Panc1 (cell line): ENCODE measurements at regions of chr1 and their contacts with region 1.

Region 1: GRCh38 chr1:39973503-39974135 is 18.7 kb downstream of the MFSD2A start:
- DNase-seq: peak; percentile 52
- ATAC-seq: peak; percentile 93
- H3K4me3 ChIP-seq: no peak overlapping the region
- H3K27ac ChIP-seq: no peak overlapping the region
- H3K4me1 ChIP-seq: no peaks in the 10 kb centered on the region
- H3K27me3 ChIP-seq: no peaks in the 10 kb centered on the region
- CTCF ChIP-seq: peak; percentile 96

Region 2: GRCh38 chr1:39387452-39387851 is 586.2 kb before region 1 on chr1:
- CTCF ChIA-PET with region 1: no interaction called
- POLR2A ChIA-PET with region 1: no interaction called
- in situ Hi-C with region 1: no loop called
- intact Hi-C with region 1: no loop called
- DNase-seq: no peak
- ATAC-seq: peak; percentile 60
- H3K4me3 ChIP-seq: no peak overlapping the region
- H3K27ac ChIP-seq: no peak overlapping the region; the same call in 1 of the 2 replicates
- H3K4me1 ChIP-seq: peaks cover 23% of the 10 kb centered on the region
- H3K27me3 ChIP-seq: no peaks in the 10 kb centered on the region
- CTCF ChIP-seq: peak; percentile 62

Region 3: GRCh38 chr1:39816415-39817090 is 157.1 kb before region 1 on chr1:
- CTCF ChIA-PET with region 1: interaction called, 3 read pairs
- POLR2A ChIA-PET with region 1: no interaction called
- in situ Hi-C with region 1: no loop called
- intact Hi-C with region 1: loop called (anchors 5 kb)
- DNase-seq: peak; percentile 77
- ATAC-seq: peak; percentile 87
- H3K4me3 ChIP-seq: no peak overlapping the region
- H3K27ac ChIP-seq: no peak overlapping the region
- H3K4me1 ChIP-seq: no peaks in the 10 kb centered on the region
- H3K27me3 ChIP-seq: no peaks in the 10 kb centered on the region
- CTCF ChIP-seq: peak; percentile 92

Region 4: GRCh38 chr1:39919545-39919944 is 54.1 kb before region 1 on chr1:
- CTCF ChIA-PET with region 1: interaction called, 28 read pairs
- POLR2A ChIA-PET with region 1: no interaction called
- in situ Hi-C with region 1: no loop called
- intact Hi-C with region 1: loop called (anchors 5 kb)
- DNase-seq: peak; percentile 45
- ATAC-seq: peak; percentile 97
- H3K4me3 ChIP-seq: no peak overlapping the region
- H3K27ac ChIP-seq: no peak overlapping the region
- H3K4me1 ChIP-seq: no peaks in the 10 kb centered on the region
- H3K27me3 ChIP-seq: no peaks in the 10 kb centered on the region
- CTCF ChIP-seq: peak; percentile 84; the same call in 1 of the 2 replicates

Region 5: GRCh38 chr1:40040511-40041465 is 67.2 kb after region 1 on chr1 and contains the start of gene CAP1:
- CTCF ChIA-PET with region 1: no interaction called
- POLR2A ChIA-PET with region 1: no interaction called
- in situ Hi-C with region 1: no loop called
- intact Hi-C with region 1: loop called (anchors 10 kb)
- DNase-seq: peak; percentile 89
- ATAC-seq: peak; percentile 97
- H3K4me3 ChIP-seq: peak within 1 kb of the TSS; percentile 96 to 100
- H3K27ac ChIP-seq: peak within 1 kb of the TSS; percentile 98
- H3K4me1 ChIP-seq: peaks cover 20% of the 10 kb centered on the region
- H3K27me3 ChIP-seq: no peaks in the 10 kb centered on the region
- CTCF ChIP-seq: no peak
- total RNA-seq, gene CAP1: 463 TPM

Region 6: DNA sequence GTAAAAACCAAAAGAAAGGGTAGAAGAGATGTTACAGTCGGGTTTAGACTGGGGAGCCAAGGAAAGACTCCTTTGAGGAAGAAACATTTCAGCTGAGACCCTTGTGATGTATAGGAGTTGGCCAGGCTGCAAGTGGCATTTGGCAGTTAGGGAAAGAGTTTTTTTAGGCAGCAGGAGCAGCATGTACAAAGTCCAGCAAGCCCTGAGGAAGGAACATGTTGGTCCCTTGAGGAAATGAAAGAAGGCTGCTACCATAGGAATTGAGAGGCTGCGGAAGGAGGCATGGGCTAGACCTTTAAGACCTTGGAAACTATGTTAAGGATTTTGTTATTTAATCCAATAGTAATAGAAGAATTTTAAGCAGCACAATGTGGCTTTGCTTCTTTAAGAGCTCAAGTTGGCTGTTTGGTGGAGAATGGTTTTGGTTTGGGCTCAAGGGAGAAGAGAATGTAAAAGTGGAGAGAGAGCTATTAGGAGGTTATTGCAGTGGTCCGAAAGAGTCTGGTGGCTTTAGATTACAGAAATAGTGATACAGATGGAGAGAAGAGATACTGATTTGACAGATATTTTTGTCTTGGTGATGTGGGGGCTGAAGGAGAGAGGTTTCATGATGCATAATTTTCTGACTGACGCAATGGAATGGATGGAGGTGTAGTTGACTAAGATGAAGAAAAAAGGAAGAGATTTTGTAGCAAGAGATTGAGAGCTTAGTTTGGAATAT is 426.5 kb after region 1 on chr1:
- CTCF ChIA-PET with region 1: no interaction called
- POLR2A ChIA-PET with region 1: no interaction called
- in situ Hi-C with region 1: no loop called
- intact Hi-C with region 1: no loop called
- DNase-seq: no peak
- ATAC-seq: no peak
- H3K4me3 ChIP-seq: no peak overlapping the region
- H3K27ac ChIP-seq: no peak overlapping the region
- H3K4me1 ChIP-seq: peaks cover 9% of the 10 kb centered on the region; the same call in 1 of the 2 replicates
- H3K27me3 ChIP-seq: no peaks in the 10 kb centered on the region
- CTCF ChIP-seq: no peak